Right cardiac atrium (tissue), 5 donors: ENCODE measurements at regions of chr3 and their contacts with region 1.

Region 1: GRCh38 chr3:170414202-170414663 is 4.4 kb upstream of the CLDN11 start:
- DNase-seq: no peak
- ATAC-seq: peak in 1 of 2 donors; percentile 34
- H3K4me3 ChIP-seq: no peak overlapping the region
- H3K27ac ChIP-seq: no peak overlapping the region
- H3K4me1 ChIP-seq: no peaks in the 10 kb centered on the region
- H3K27me3 ChIP-seq: no peaks in the 10 kb centered on the region

Region 2: DNA sequence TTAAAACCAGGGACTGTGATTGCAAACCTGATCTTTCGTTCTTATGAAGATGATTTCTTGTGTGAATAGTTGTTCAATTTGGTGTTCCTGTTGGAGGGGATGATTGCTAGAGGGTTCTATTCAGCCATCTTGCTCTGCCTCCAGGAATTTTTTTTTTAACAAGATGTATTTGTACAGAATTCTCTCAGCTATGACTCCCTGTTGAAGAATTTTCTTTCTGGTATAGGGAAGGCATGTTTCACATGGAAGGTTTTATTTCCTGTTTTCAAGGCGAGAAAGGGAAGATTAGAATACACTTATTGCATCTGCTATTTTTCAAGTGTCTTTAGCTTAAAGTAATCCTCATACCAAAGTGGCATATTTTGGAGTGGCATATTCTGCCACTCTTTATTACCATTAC is 595.9 kb before region 1 on chr3:
- intact Hi-C with region 1: no loop called
- DNase-seq: no peak
- ATAC-seq: no peak
- H3K4me3 ChIP-seq: no peak overlapping the region
- H3K27ac ChIP-seq: no peak overlapping the region
- H3K4me1 ChIP-seq: peaks cover 3% of the 10 kb centered on the region
- H3K27me3 ChIP-seq: no peaks in the 10 kb centered on the region

Region 3: GRCh38 chr3:170307671-170308403 is 106.4 kb before region 1 on chr3:
- intact Hi-C with region 1: loop called in 1 of 4 experiments (anchors 2 kb)
- DNase-seq: no peak
- ATAC-seq: no peak
- H3K4me3 ChIP-seq: no peak overlapping the region
- H3K27ac ChIP-seq: no peak overlapping the region
- H3K4me1 ChIP-seq: no peaks in the 10 kb centered on the region
- H3K27me3 ChIP-seq: no peaks in the 10 kb centered on the region

Region 4: GRCh38 chr3:170689893-170690660 is 275.8 kb after region 1 on chr3:
- intact Hi-C with region 1: loop called in 3 of 4 experiments (anchors 5 to 10 kb)
- DNase-seq: peak; percentile 72 to 86 (median 84)
- ATAC-seq: peak; percentile 76 to 78
- H3K4me3 ChIP-seq: no peak overlapping the region
- H3K27ac ChIP-seq: no peak overlapping the region
- H3K4me1 ChIP-seq: peaks cover 1% of the 10 kb centered on the region
- H3K27me3 ChIP-seq: no peaks in the 10 kb centered on the region

Region 5: DNA sequence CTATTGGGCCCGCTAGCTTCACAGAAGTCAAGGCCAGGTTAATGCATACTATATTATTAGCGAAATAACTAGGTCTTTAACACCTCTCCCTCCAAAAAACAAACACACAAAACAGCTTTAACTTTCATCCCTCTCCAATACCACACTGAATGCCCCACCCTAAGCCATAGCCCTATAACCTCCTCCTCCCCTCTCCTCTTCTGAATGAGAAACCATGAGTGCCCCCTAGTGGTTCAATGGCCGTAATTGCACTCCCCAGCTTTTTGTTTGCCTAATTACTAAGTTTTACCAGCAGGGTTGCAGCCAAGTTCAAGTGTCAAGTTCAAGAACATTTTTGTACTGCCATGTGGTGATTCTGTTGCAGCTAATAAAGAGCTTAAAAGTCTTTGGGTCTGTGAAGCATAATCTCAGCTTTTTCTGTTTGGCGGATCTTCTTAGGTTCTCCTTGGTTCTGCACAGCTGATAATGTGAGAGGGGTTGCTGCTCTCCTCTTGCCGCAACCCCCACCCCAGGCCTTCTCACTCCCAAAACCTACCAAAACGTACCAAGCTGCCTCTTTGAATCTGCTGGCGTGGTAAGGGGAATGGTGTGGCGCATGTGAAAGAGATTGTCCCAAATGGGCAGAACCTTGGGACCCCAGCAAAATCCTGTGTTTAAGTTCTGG is 397.8 kb after region 1 on chr3:
- intact Hi-C with region 1: loop called (anchors 5 to 10 kb)
- DNase-seq: peak; percentile 40 to 77 (median 63)
- ATAC-seq: peak; percentile 74 to 86
- H3K4me3 ChIP-seq: no peak overlapping the region
- H3K27ac ChIP-seq: no peak overlapping the region
- H3K4me1 ChIP-seq: no peaks in the 10 kb centered on the region
- H3K27me3 ChIP-seq: no peaks in the 10 kb centered on the region